Tibial artery (tissue), 4 donors: ENCODE measurements at regions of chr2 and their contacts with region 1.

Region 1: GRCh38 chr2:205947621-205948495 is 138.1 kb downstream of the INO80D start:
- DNase-seq: peak; percentile 76 to 79
- H3K4me3 ChIP-seq: peak overlapping the region; percentile 15 to 17
- H3K27ac ChIP-seq: peak overlapping the region; percentile 25 to 40
- H3K4me1 ChIP-seq: peaks cover 0 to 12% (median 7%) of the 10 kb centered on the region in 4 donors
- H3K27me3 ChIP-seq: no peaks in the 10 kb centered on the region
- CTCF ChIP-seq: peak; percentile 84 to 92

Region 2: GRCh38 chr2:204722207-204722606 is 1225.7 kb before region 1 on chr2:
- intact Hi-C with region 1: loop called (anchors 10 kb)
- DNase-seq: no peak
- H3K4me3 ChIP-seq: no peak overlapping the region
- H3K27ac ChIP-seq: no peak overlapping the region
- H3K4me1 ChIP-seq: peaks cover 0 to 12% (median 3%) of the 10 kb centered on the region in 4 donors
- H3K27me3 ChIP-seq: no peaks in the 10 kb centered on the region
- CTCF ChIP-seq: no peak